K562 (cell line): ENCODE measurements at regions of chr2 and their contacts with region 1.

Region 1: DNA sequence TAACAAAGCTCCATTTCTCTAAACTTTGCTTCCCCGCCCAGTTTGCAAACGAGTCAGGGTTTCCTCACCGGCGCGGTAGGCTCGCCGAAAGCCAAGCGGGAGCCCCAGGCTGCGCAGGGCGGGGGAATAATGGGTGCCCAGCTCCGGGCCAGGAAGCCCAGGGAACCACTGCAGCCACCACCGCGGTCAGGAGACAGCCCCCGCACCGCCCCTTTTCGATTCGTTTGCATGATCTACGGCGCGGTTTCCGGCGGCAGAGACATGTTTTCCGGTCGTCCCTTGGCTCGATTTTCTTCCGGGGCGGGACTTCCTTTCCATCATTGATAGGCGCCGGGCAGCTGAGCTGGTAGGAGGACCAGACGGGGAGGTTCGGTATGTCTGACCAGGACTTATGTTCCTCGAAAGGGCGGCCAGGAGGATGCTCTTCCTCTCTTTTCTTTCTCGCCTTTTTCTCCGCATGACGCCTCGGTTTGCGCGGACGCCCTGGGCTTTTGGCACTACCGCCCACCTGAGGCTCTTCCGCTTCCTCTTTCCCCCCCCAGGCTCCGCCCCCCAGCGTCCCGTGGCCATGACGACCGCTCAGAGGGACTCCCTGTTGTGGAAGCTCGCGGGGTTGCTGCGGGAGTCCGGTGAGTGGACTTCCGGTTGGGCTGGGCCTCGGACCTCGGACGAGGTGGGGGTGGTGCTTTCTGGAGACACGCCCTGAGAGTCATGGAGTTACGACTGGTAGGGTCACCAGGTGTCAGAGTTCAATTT is at the start of gene STK11IP:
- DNase-seq: peak; percentile 95 to 97 (median 96)
- ATAC-seq: peak; percentile 94
- H3K4me3 ChIP-seq: peak within 1 kb of the TSS; percentile 53
- H3K27ac ChIP-seq: peak within 1 kb of the TSS; percentile 90
- H3K4me1 ChIP-seq: peaks cover 9 to 20% of the 10 kb centered on the region in 2 experiments
- H3K27me3 ChIP-seq: no peaks in the 10 kb centered on the region
- CTCF ChIP-seq: 0 out of 6 replicates have a peak, but pooled peaks of 1 of the 3 experiments have one; percentile 3
- EP300 ChIP-seq: no peak; the same call in 1 of the 2 replicates
- POLR2A ChIP-seq: peak; percentile 90
- RAD21 ChIP-seq: no peak
- polyA plus RNA-seq, gene STK11IP: 0.52 to 0.89 TPM

Region 2: DNA sequence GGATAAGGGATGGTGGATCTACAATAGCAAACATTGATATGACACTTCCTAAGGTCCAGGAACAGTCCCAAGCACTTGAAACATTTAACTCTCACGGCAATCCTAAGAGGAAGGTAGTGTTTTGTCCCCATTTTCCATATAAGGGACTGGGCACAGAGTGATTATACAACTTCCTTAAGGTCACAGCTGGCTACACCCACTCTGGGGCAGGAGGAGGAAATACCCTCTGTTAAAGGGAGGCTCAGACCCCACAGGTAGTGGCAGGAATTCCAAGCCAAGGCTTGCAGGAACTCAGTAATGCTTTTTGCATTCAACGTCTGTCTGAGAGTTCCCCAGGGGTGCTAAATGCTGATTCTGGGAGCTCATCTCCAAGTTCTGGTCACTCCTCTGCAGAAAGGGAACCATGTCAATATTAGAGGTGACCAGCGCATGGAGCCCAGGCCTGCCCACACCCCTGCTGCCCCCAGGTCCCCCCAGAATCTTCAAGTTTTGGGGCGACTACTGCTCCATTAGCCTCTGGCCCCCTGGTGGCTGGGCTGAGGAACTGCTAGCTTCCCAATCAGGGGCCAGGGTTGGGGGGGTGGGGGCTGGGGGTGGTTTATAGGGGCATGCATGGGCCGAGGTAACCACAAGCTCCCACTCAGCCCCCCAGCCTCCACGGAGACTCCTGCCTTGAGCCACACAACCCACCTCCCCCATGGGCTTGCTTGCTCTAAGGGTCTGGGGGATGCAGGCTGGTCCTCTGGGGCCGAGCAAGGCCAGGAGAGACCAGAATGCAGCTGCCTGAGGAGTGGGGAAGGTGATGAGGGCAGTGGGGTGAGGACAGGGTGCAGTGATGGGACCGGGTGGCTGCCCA is 37.5 kb before region 1 on chr2:
- CTCF ChIA-PET with region 1: no interaction called
- POLR2A ChIA-PET with region 1: no interaction called
- in situ Hi-C with region 1: no loop called
- intact Hi-C with region 1: loop called (anchors 5 kb)
- DNase-seq: peak in 3 of 4 experiments; percentile 63 to 69 (median 64)
- ATAC-seq: peak; percentile 72
- H3K4me3 ChIP-seq: no peak overlapping the region
- H3K27ac ChIP-seq: no peak overlapping the region
- H3K4me1 ChIP-seq: peaks cover 2 to 44% of the 10 kb centered on the region in 2 experiments; a peak in 2 of 5 replicates
- H3K27me3 ChIP-seq: peaks cover 0 to 8% of the 10 kb centered on the region in 2 experiments; a peak in 3 of 5 replicates
- CTCF ChIP-seq: peak; percentile 39 to 55 (median 51); a peak in 5 of 6 replicates
- EP300 ChIP-seq: no peak
- POLR2A ChIP-seq: no peak
- RAD21 ChIP-seq: no peak

Region 3: DNA sequence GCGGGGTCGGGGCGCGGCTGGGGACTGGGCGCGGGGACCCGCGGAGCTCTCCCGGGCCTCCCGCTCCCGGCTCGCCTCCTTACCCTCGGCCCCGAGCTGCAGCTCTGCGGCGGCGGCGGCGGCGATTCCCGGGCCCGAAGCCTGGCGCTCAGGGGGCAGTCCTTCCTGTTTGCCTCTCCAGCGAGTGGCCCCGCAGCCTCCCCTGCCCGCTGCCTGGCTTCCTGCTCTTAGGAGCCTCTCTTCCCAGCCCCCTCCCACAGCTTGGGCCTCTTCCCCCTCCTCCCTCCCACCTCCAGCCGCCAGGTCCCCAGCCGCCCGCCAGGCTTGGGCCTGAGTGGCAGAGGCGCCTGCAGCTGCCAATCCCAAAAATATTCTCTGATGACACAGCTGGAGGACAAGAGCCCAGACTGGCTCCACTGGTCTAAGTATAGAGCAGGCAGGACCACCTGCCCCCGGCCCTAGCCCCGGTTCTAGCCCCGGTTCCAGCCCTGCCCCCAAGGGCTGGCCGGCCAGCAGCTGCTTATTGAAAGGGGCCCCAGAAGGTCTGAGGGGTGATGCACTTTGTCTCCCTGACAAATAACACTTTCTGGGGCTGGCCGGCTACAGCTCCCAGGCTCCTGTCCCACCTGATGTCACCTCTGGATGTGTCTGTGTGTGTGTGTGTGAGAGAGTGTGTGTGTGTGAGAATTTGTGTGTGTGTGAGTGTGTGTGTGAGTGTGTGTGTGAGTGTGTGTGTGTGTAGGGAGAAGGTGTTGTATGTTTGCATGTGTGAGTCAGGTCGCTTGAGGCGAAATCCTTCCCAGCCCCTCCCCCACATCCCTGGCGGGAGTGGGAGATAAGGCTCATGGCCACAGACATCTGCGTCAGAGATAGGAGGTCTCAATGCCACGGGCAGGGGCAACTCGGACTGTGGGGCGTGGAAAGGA is 26.2 kb before region 1 on chr2 and contains the start of gene OBSL1:
- CTCF ChIA-PET with region 1: no interaction called
- POLR2A ChIA-PET with region 1: interaction called, 12 read pairs
- in situ Hi-C with region 1: no loop called
- intact Hi-C with region 1: loop called (anchors 1 kb)
- DNase-seq: peak; percentile 83 to 91 (median 85)
- ATAC-seq: peak; percentile 71
- H3K4me3 ChIP-seq: peak within 1 kb of the TSS; percentile 47
- H3K27ac ChIP-seq: peak within 1 kb of the TSS; percentile 90
- H3K4me1 ChIP-seq: peaks cover 26 to 61% of the 10 kb centered on the region in 2 experiments; a peak in 4 of 5 replicates
- H3K27me3 ChIP-seq: no peaks in the 10 kb centered on the region
- CTCF ChIP-seq: no peak
- EP300 ChIP-seq: peak; percentile 83
- POLR2A ChIP-seq: peak; percentile 68
- RAD21 ChIP-seq: no peak
- polyA plus RNA-seq, gene OBSL1: 1.2 to 1.9 TPM

Region 4: GRCh38 chr2:219578790-219579616 is 18.7 kb before region 1 on chr2:
- CTCF ChIA-PET with region 1: no interaction called
- POLR2A ChIA-PET with region 1: interaction called, 11 read pairs
- in situ Hi-C with region 1: no loop called
- intact Hi-C with region 1: no loop called
- DNase-seq: no peak
- ATAC-seq: no peak
- H3K4me3 ChIP-seq: no peak overlapping the region
- H3K27ac ChIP-seq: no peak overlapping the region
- H3K4me1 ChIP-seq: peaks cover 25 to 31% of the 10 kb centered on the region in 2 experiments; a peak in 4 of 5 replicates
- H3K27me3 ChIP-seq: no peaks in the 10 kb centered on the region
- CTCF ChIP-seq: no peak
- EP300 ChIP-seq: no peak
- POLR2A ChIP-seq: no peak
- RAD21 ChIP-seq: no peak

Region 5: GRCh38 chr2:219706823-219707281 is 109.1 kb after region 1 on chr2:
- CTCF ChIA-PET with region 1: no interaction called
- POLR2A ChIA-PET with region 1: no interaction called
- in situ Hi-C with region 1: no loop called
- intact Hi-C with region 1: no loop called
- DNase-seq: no peak
- ATAC-seq: no peak
- H3K4me3 ChIP-seq: no peak overlapping the region
- H3K27ac ChIP-seq: no peak overlapping the region
- H3K4me1 ChIP-seq: no peaks in the 10 kb centered on the region; a peak in 1 of 5 replicates
- H3K27me3 ChIP-seq: no peaks in the 10 kb centered on the region; a peak in 2 of 5 replicates
- CTCF ChIP-seq: no peak
- EP300 ChIP-seq: no peak
- POLR2A ChIP-seq: no peak
- RAD21 ChIP-seq: no peak

Region 6: DNA sequence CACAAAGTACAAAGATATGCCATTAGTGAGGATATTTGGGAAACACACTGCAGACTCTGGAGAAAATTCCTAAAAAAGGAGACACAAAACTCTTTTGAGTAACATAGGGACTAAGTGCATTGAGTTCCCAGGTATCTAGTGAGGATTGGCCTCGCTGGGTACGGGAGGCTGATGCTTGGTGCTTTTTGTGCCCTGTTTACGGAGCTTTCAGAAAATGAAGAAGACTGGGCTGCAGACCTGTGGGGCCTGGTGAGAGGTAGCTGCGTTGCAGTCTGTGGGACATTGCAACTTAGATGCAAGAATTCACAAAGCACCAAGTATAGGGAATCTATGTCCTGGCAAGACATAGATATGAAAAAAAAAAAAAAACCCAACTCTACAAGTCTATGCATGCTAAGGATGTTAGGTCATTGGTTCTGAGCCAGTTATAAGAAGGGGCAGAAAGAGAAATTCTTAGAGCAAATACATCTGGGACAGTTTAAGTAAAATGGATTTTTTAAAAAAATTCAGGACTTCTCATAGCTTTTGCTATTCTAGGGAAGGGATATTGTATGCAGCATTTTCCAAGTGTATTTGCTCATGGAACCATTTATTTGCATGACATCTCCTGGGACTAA is 185.7 kb after region 1 on chr2:
- CTCF ChIA-PET with region 1: no interaction called
- POLR2A ChIA-PET with region 1: no interaction called
- in situ Hi-C with region 1: no loop called
- intact Hi-C with region 1: no loop called
- DNase-seq: no peak
- ATAC-seq: no peak
- H3K4me3 ChIP-seq: no peak overlapping the region
- H3K27ac ChIP-seq: no peak overlapping the region
- H3K4me1 ChIP-seq: no peaks in the 10 kb centered on the region
- H3K27me3 ChIP-seq: peaks cover 0 to 2% of the 10 kb centered on the region in 2 experiments; a peak in 1 of 5 replicates
- CTCF ChIP-seq: no peak
- EP300 ChIP-seq: no peak
- POLR2A ChIP-seq: no peak
- RAD21 ChIP-seq: no peak